ENCODE measurements at regions of chr2 and their contacts with region 1.

Region 1: GRCh38 chr2:17851731-17852585 is 26.5 kb upstream of the KCNS3 start:
- DNase-seq: peak; percentile 67
- H3K4me3 Mint-ChIP-seq: no peak overlapping the region
- H3K27ac Mint-ChIP-seq: no peak overlapping the region
- H3K4me1 Mint-ChIP-seq: no peaks in the 10 kb centered on the region
- H3K27me3 Mint-ChIP-seq: peaks cover 43% of the 10 kb centered on the region
- CTCF ChIP-seq: peak; percentile 91

Region 2: GRCh38 chr2:17460371-17461086 is 391.4 kb before region 1 on chr2:
- CTCF ChIA-PET with region 1: no interaction called
- intact Hi-C with region 1: no loop called
- DNase-seq: no peak
- H3K4me3 Mint-ChIP-seq: no peak overlapping the region
- H3K27ac Mint-ChIP-seq: no peak overlapping the region
- H3K4me1 Mint-ChIP-seq: no peaks in the 10 kb centered on the region
- H3K27me3 Mint-ChIP-seq: no peaks in the 10 kb centered on the region
- CTCF ChIP-seq: no peak

Region 3: DNA sequence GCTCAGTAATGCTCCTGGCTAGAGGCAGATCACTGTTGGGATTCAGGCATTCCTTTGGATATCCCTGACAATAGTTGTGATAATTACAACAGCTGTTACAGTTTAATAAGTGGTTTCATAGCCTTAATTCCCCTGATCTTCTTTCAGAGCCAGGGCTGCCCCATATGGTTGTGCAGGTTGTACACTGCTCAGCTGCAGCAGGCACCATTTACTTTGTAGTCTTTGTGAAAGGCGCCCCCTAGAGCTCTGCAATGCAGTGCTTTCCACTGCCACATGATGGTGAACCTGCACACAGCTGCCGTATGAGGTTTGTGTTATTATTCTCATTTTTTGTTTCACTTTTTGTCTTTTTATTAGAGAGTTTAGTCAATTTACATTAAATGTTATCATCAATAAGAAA is 265.6 kb after region 1 on chr2:
- CTCF ChIA-PET with region 1: no interaction called
- intact Hi-C with region 1: loop called (anchors 1 kb)
- DNase-seq: peak; percentile 50
- H3K4me3 Mint-ChIP-seq: no peak overlapping the region
- H3K27ac Mint-ChIP-seq: no peak overlapping the region
- H3K4me1 Mint-ChIP-seq: no peaks in the 10 kb centered on the region
- H3K27me3 Mint-ChIP-seq: peaks cover 12% of the 10 kb centered on the region
- CTCF ChIP-seq: peak; percentile 32

Region 4: DNA sequence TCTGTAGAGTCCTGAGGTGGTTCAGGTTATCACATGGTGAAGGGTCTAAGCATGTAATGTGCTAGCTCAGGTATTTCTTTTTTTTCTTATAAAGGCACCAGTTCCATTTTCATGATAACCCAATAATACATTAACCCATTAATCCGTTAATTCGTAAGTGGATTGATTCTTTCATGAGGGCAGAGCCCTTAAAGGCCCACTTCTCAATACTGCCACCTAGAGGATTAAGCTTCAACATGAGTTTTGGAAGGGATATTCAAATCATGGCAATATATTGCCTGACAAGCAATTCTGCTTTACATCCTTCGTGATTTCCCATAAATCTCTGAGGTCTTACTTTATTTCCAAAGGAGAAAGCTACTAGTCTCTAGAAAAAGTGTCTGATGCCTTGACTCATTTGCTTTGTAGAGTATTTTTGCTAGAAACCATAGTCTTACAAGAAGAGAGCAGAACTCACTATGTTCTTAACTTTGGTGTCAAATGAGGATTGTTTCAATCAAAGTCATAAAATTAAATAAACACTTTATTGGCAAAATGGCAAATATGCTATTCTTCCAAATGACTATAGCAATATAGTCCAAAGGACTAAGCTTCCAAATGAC is 297.8 kb after region 1 on chr2:
- CTCF ChIA-PET with region 1: no interaction called
- intact Hi-C with region 1: loop called (anchors 1 kb)
- DNase-seq: no peak
- H3K4me3 Mint-ChIP-seq: no peak overlapping the region
- H3K27ac Mint-ChIP-seq: no peak overlapping the region
- H3K4me1 Mint-ChIP-seq: no peaks in the 10 kb centered on the region
- H3K27me3 Mint-ChIP-seq: peaks cover 24% of the 10 kb centered on the region
- CTCF ChIP-seq: peak; percentile 35

Region 5: DNA sequence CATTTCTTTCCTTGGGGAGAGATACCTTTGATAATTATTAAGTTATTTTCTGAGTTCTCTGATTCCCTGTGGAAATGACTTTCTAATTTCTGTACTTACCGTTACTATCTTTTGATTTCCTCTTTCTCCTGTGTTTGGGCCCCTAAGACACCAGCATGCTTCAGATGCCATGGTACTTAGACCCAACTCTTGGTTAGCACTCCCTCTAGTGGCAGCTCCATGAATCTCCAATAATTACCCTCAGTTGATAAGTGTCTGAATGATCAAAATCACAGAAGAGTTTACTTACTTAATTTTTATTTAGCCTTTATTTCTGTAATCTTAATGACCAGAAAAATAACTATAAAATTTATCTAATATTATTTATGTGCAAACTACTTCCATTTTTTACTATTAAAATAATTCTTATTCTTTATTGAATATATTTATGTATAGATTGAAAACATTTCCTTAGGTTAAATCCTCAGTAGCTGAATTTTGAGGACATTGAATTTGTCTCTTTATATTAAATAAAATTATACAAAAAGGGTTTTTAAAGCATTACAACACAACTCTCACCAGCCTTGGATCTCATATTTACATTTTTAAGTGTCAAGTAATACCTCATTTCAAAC is 326.9 kb after region 1 on chr2:
- CTCF ChIA-PET with region 1: no interaction called
- intact Hi-C with region 1: loop called (anchors 1 kb)
- DNase-seq: peak; percentile 60
- H3K4me3 Mint-ChIP-seq: no peak overlapping the region
- H3K27ac Mint-ChIP-seq: no peak overlapping the region
- H3K4me1 Mint-ChIP-seq: peaks cover 13% of the 10 kb centered on the region
- H3K27me3 Mint-ChIP-seq: no peaks in the 10 kb centered on the region
- CTCF ChIP-seq: peak; percentile 74